GM10248 (cell line): ENCODE measurements at regions of chr11 and their contacts with region 1.

Region 1: DNA sequence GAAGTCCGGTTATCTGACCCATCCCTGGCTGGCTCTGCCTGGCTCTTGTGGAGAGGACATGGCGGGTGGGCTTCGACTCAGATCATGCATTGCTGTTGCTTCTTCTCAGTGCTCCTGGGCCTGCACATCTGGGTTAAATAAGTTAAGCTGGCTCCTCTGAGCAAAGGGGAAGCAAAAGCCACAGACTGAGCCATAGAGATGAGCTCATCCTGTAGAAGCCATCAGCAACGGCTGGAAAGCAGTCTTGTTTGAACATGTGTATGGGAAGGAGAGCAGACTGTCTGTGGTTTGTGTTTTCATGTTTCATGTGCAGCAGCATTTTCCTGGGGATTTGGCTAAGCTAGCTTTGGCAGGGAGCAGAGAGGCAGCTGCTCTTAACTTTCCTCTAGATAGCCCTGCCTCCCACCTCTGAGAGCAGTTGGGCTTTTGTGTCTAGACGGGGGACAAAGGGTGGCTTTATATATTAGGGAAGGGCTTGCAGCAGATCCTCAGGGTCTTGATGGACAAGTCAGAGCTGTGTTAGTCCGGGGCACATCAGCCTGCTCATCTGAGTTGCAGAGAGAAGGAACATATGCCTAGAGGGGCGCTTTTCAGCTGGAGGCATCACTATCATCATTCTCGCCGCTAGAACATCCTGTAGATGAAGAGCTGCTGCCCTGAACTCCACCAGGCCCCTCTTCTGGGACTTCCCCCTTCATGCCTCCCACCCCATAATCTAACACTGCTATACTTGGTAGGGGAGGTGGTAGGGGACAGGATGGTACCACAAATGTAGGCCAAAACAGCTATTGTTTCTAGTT is 14.9 kb downstream of the DCPS start:
- DNase-seq: peak; percentile 61
- CTCF ChIP-seq: no peak

Region 2: DNA sequence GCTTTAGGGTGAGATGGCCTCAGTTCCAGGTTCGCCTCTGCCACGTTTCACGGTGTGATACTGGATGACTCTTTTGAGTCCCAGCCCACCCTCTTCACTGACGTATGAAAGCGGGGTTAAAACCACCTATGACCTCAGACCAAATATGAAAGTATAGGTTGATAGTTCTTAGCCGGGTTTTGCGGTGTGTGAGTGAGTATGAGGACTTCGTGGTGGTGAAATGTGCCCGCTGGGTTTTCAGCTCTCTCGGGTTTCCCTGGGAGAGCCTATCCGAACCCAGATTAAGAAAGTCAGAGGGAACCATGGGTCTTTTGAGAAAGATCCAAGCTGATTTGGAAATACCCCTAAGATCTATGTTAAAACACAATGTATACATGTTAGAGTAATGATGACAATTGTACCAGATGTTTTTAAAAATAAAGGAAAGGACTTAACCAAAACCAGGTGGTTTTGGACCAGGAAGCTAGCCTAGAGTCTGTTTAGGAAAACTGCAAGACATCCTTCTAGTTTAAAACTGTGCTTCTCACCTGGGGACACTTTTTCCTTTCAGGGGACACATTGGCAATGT is 11.0 kb after region 1 on chr11:
- CTCF ChIA-PET with region 1: interaction called, 13 read pairs
- POLR2A ChIA-PET with region 1: no interaction called
- DNase-seq: no peak
- CTCF ChIP-seq: no peak

Region 3: GRCh38 chr11:126341760-126342161 is 23.0 kb after region 1 on chr11:
- CTCF ChIA-PET with region 1: no interaction called
- POLR2A ChIA-PET with region 1: no interaction called
- DNase-seq: no peak
- CTCF ChIP-seq: no peak

Region 4: GRCh38 chr11:126366065-126366785 is 47.5 kb after region 1 on chr11:
- CTCF ChIA-PET with region 1: no interaction called
- POLR2A ChIA-PET with region 1: no interaction called
- DNase-seq: no peak
- CTCF ChIP-seq: no peak